HCT116 (cell line): ENCODE measurements at regions of chr2 and their contacts with region 1.

Region 1: GRCh38 chr2:222318026-222318711 is 19.4 kb upstream of the PAX3 start:
- DNase-seq: peak; percentile 35
- ATAC-seq: peak; percentile 98
- H3K4me3 ChIP-seq: peak overlapping the region; percentile 36 to 58
- H3K27ac ChIP-seq: no peak overlapping the region
- H3K4me1 ChIP-seq: peaks cover 0 to 8% of the 10 kb centered on the region in 2 experiments; a peak in 2 of 4 replicates
- H3K27me3 ChIP-seq: peaks cover 28% of the 10 kb centered on the region
- CTCF ChIP-seq: peak; percentile 39 to 74 (median 54)
- POLR2A ChIP-seq: no peak
- RAD21 ChIP-seq: peak; percentile 86

Region 2: GRCh38 chr2:221893501-221893900 is 424.7 kb before region 1 on chr2:
- CTCF ChIA-PET with region 1: no interaction called
- POLR2A ChIA-PET with region 1: no interaction called
- RAD21 ChIA-PET with region 1: no interaction called
- intact Hi-C with region 1: no loop called
- DNase-seq: no peak
- ATAC-seq: no peak
- H3K4me3 ChIP-seq: no peak overlapping the region
- H3K27ac ChIP-seq: no peak overlapping the region
- H3K4me1 ChIP-seq: no peaks in the 10 kb centered on the region
- H3K27me3 ChIP-seq: 0 out of 2 replicates have a peak, but pooled peaks cover 4% of the 10 kb centered on the region
- CTCF ChIP-seq: no peak
- POLR2A ChIP-seq: no peak
- RAD21 ChIP-seq: no peak

Region 3: GRCh38 chr2:222038067-222038802 is 279.9 kb before region 1 on chr2:
- CTCF ChIA-PET with region 1: interaction called, 11 read pairs
- POLR2A ChIA-PET with region 1: no interaction called
- RAD21 ChIA-PET with region 1: interaction called in 1 of 2 experiments, 3 read pairs
- intact Hi-C with region 1: no loop called
- DNase-seq: no peak
- ATAC-seq: no peak
- H3K4me3 ChIP-seq: no peak overlapping the region
- H3K27ac ChIP-seq: no peak overlapping the region
- H3K4me1 ChIP-seq: no peaks in the 10 kb centered on the region
- H3K27me3 ChIP-seq: peaks cover 11% of the 10 kb centered on the region; the same call in 1 of the 2 replicates
- CTCF ChIP-seq: peak in 2 of 3 experiments; percentile 36 to 57; a peak in 3 of 6 replicates
- POLR2A ChIP-seq: no peak
- RAD21 ChIP-seq: peak; percentile 43

Region 4: DNA sequence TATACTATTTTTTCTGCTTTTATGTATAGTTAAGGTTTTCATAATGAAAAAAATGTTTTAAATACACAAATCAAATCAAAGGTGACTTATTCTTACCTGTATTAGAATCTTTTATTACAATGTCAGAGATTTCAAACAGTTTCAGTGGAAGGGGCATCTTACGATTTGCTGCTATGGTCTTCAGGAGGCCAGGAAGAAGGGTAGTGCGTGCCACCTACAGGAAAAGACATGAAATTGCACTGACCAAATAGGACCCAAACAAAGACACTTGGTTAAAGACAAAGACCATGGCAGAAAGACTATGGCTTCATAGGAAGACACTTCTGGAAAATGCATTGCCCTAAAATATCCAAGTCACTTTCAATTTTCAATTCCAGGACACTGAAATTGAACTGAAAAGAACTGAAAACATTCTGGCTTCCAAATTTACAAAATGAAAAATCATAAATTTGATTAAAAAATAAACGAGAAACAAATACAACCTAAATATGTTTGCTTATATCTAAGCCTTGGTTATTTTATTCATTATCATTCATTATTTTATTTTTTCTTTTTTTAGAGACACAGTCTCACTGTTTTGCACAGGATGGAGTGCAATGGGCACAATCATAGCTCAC is 295.7 kb after region 1 on chr2:
- CTCF ChIA-PET with region 1: interaction called, 7 read pairs
- POLR2A ChIA-PET with region 1: no interaction called
- RAD21 ChIA-PET with region 1: no interaction called
- intact Hi-C with region 1: loop called (anchors 1 kb)
- DNase-seq: peak; percentile 15
- ATAC-seq: peak; percentile 92
- H3K4me3 ChIP-seq: no peak overlapping the region
- H3K27ac ChIP-seq: no peak overlapping the region
- H3K4me1 ChIP-seq: no peaks in the 10 kb centered on the region
- H3K27me3 ChIP-seq: no peaks in the 10 kb centered on the region
- CTCF ChIP-seq: peak; percentile 36 to 76 (median 68); a peak in 5 of 6 replicates
- POLR2A ChIP-seq: no peak
- RAD21 ChIP-seq: peak; percentile 67